ENCODE measurements at regions of chr14 and their contacts with region 1.

Region 1: DNA sequence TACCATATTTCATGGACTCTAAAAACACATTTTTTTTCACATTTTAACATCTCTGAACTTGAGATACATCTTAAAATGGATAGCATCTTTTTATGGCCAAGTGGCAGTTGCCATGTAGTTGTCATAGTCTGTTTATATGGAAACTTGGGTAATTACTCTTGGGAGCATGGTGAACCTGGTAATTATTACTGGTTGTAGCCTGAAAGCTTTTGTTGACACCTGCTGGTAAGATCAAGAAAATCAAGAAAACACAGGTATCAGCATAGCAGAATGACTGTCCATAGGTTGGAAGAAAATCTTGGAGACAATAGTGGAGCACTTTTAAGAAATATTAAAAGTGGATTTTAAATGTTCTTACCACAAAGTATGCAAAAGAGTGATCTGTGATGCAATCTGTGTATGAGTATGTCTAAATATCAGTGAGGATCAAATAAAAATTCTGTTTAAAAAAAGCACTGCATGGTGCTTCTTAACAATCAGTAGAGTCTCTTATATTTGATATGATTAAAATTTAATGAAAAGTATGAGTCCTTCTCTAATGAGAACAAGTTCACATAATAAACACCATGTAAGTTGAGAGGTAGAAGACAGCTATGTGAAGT is 44.2 kb downstream of the TTC8 start:
- DNase-seq: peak; percentile 51
- H3K4me3 Mint-ChIP-seq: no peak overlapping the region
- H3K27ac Mint-ChIP-seq: no peak overlapping the region
- H3K4me1 Mint-ChIP-seq: no peaks in the 10 kb centered on the region
- H3K27me3 Mint-ChIP-seq: no peaks in the 10 kb centered on the region
- CTCF ChIP-seq: peak; percentile 61

Region 2: DNA sequence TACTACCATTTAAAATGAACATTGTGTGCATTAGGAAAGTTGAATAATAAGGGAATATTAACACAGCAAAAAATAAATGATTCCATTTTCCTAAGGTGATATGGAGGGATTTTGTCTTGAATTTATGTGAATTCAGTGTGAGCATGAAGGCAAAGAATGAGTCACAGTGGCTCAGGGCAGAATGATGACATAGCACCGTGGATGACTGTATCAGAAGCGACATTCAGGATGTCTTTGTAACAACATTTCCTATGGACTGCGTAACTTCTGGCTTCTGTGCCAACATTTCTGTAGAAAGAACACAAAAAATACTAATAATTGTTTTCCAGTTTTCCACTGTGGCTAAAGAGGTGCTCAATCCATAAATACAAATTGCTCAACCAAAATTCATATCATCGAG is 10.4 kb after region 1 on chr14:
- CTCF ChIA-PET with region 1: interaction called, 14 read pairs
- POLR2A ChIA-PET with region 1: interaction called, 3 read pairs
- intact Hi-C with region 1: no loop called
- DNase-seq: peak; percentile 77
- H3K4me3 Mint-ChIP-seq: no peak overlapping the region
- H3K27ac Mint-ChIP-seq: peak overlapping the region; percentile 27
- H3K4me1 Mint-ChIP-seq: no peaks in the 10 kb centered on the region
- H3K27me3 Mint-ChIP-seq: no peaks in the 10 kb centered on the region
- CTCF ChIP-seq: no peak

Measured in MCF 10A (cell line).